ENCODE measurements at regions of chr5 and their contacts with region 1.

Region 1: GRCh38 chr5:134113902-134114875 is at the start of gene TCF7:
- DNase-seq: peak; percentile 67 to 92 (median 82)
- ATAC-seq: peak; percentile 67
- H3K4me3 ChIP-seq: peak within 1 kb of the TSS; percentile 78 to 99
- H3K4me3 Mint-ChIP-seq: peak within 1 kb of the TSS; percentile 95
- H3K27ac ChIP-seq: peak within 1 kb of the TSS; percentile 71 to 72
- H3K27ac Mint-ChIP-seq: peak within 1 kb of the TSS; percentile 96
- H3K4me1 ChIP-seq: peaks cover 37% of the 10 kb centered on the region
- H3K4me1 Mint-ChIP-seq: peaks cover 53% of the 10 kb centered on the region
- H3K27me3 ChIP-seq: no peaks in the 10 kb centered on the region
- H3K27me3 Mint-ChIP-seq: no peaks in the 10 kb centered on the region
- CTCF ChIP-seq: no peak
- total RNA-seq, gene TCF7: 517 to 538 TPM

Region 2: GRCh38 chr5:134070725-134071613 is 43.2 kb before region 1 on chr5:
- CTCF ChIA-PET with region 1: interaction called, 3 read pairs
- POLR2A ChIA-PET with region 1: interaction called, 16 read pairs
- intact Hi-C with region 1: loop called in 1 of 2 experiments (anchors 2 kb)
- DNase-seq: peak in 5 of 9 experiments; percentile 32 to 59 (median 42)
- ATAC-seq: peak; percentile 53
- H3K4me3 ChIP-seq: peak overlapping the region; percentile 40 to 44
- H3K4me3 Mint-ChIP-seq: peak overlapping the region; percentile 79
- H3K27ac ChIP-seq: no peak overlapping the region
- H3K27ac Mint-ChIP-seq: peak overlapping the region; percentile 92
- H3K4me1 ChIP-seq: peaks cover 67% of the 10 kb centered on the region
- H3K4me1 Mint-ChIP-seq: peaks cover 69% of the 10 kb centered on the region
- H3K27me3 ChIP-seq: peaks cover 0 to 3% of the 10 kb centered on the region in 2 experiments
- H3K27me3 Mint-ChIP-seq: no peaks in the 10 kb centered on the region
- CTCF ChIP-seq: peak; percentile 13

Region 3: DNA sequence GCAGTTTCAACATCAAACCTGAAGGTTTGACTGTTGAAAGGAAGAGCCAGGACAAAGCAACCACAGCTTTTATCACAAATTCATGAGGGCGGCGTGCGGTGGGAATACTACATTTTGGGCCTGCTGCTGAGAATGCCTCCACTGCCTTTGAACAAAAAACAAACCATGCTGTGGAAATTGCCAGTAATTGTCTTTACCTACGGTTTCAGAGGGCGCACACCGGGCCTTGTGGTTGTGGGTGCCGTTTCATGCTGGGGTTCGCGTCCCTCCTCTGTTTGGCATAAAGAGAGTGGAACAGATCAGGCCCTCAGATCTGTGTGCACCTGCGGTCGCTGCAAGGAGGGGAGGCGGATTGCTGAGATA is 27.3 kb before region 1 on chr5:
- CTCF ChIA-PET with region 1: no interaction called
- POLR2A ChIA-PET with region 1: no interaction called
- intact Hi-C with region 1: loop called in 1 of 2 experiments (anchors 1 kb)
- DNase-seq: peak; percentile 51 to 88 (median 81)
- ATAC-seq: peak; percentile 68
- H3K4me3 ChIP-seq: peak overlapping the region in 1 of 2 experiments; percentile 5
- H3K4me3 Mint-ChIP-seq: peak overlapping the region; percentile 64
- H3K27ac ChIP-seq: peak overlapping the region; percentile 16 to 28
- H3K27ac Mint-ChIP-seq: peak overlapping the region; percentile 89
- H3K4me1 ChIP-seq: peaks cover 87% of the 10 kb centered on the region
- H3K4me1 Mint-ChIP-seq: peaks cover 85% of the 10 kb centered on the region
- H3K27me3 ChIP-seq: peaks cover 0 to 2% of the 10 kb centered on the region in 2 experiments
- H3K27me3 Mint-ChIP-seq: no peaks in the 10 kb centered on the region
- CTCF ChIP-seq: no peak

Region 4: GRCh38 chr5:134101686-134102439 is 12.3 kb before region 1 on chr5:
- CTCF ChIA-PET with region 1: no interaction called
- POLR2A ChIA-PET with region 1: no interaction called
- intact Hi-C with region 1: loop called (anchors 1 kb)
- DNase-seq: peak; percentile 68 to 90 (median 79)
- ATAC-seq: peak; percentile 30
- H3K4me3 ChIP-seq: peak overlapping the region in 1 of 2 experiments; percentile 12
- H3K4me3 Mint-ChIP-seq: peak overlapping the region; percentile 22
- H3K27ac ChIP-seq: peak overlapping the region; percentile 24 to 28
- H3K27ac Mint-ChIP-seq: peak overlapping the region; percentile 96
- H3K4me1 ChIP-seq: peaks cover 93% of the 10 kb centered on the region
- H3K4me1 Mint-ChIP-seq: peaks cover 87% of the 10 kb centered on the region
- H3K27me3 ChIP-seq: no peaks in the 10 kb centered on the region
- H3K27me3 Mint-ChIP-seq: no peaks in the 10 kb centered on the region
- CTCF ChIP-seq: peak; percentile 84

Region 5: DNA sequence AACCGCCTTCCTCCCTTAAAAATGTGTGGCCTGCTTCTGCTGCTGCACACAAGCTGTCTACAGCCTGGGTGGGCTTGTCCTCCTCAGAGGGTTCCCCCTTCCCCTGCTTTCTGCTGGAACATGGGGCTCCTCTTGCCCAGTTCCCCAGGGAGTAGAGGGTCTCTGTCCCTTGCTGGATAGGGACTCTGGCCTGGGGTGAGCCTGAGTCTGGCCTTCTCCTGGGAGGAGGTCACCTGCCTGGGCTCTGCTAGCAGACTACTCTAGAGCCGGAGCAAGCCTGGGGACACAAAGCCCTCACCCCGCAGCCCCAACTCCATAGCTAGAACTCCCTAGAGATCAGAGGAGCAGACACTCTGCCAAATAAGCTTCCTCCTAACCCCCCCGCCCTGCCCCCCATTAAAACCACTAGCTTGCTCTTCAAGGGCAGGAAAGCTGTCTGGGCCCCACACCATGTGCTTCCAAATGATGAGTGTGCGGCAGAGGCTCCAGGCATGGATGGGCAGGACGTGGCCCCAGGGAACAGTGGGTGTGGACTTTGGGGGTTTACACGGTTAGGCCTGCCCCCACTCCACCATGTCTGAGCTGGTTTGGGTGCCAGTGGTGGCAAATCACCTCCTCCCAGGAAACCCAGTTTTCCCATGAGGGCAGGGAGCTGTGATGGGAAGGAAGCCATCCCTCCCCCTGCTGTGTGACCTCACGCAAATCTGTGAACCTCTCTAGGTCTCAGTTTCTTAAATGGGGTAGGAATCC is 10.3 kb after region 1 on chr5:
- CTCF ChIA-PET with region 1: no interaction called
- POLR2A ChIA-PET with region 1: no interaction called
- intact Hi-C with region 1: loop called in 1 of 2 experiments (anchors 1 kb)
- DNase-seq: peak in 5 of 9 experiments; percentile 67 to 85 (median 71)
- ATAC-seq: peak; percentile 28
- H3K4me3 ChIP-seq: peak overlapping the region; percentile 40 to 52
- H3K4me3 Mint-ChIP-seq: peak overlapping the region; percentile 95
- H3K27ac ChIP-seq: peak overlapping the region; percentile 64 to 83
- H3K27ac Mint-ChIP-seq: peak overlapping the region; percentile 96
- H3K4me1 ChIP-seq: peaks cover 91% of the 10 kb centered on the region
- H3K4me1 Mint-ChIP-seq: peaks cover 95% of the 10 kb centered on the region
- H3K27me3 ChIP-seq: no peaks in the 10 kb centered on the region
- H3K27me3 Mint-ChIP-seq: no peaks in the 10 kb centered on the region
- CTCF ChIP-seq: no peak

Region 6: GRCh38 chr5:134132372-134133034 is 18.3 kb after region 1 on chr5:
- CTCF ChIA-PET with region 1: no interaction called
- POLR2A ChIA-PET with region 1: no interaction called
- intact Hi-C with region 1: loop called in 1 of 2 experiments (anchors 1 kb)
- DNase-seq: peak; percentile 72 to 99 (median 85)
- ATAC-seq: peak; percentile 70
- H3K4me3 ChIP-seq: peak overlapping the region; percentile 16 to 52
- H3K4me3 Mint-ChIP-seq: peak overlapping the region; percentile 95
- H3K27ac ChIP-seq: peak overlapping the region; percentile 64 to 88
- H3K27ac Mint-ChIP-seq: peak overlapping the region; percentile 96
- H3K4me1 ChIP-seq: peaks cover 98% of the 10 kb centered on the region
- H3K4me1 Mint-ChIP-seq: peaks cover 95% of the 10 kb centered on the region
- H3K27me3 ChIP-seq: no peaks in the 10 kb centered on the region
- H3K27me3 Mint-ChIP-seq: no peaks in the 10 kb centered on the region
- CTCF ChIP-seq: peak; percentile 44

Region 7: DNA sequence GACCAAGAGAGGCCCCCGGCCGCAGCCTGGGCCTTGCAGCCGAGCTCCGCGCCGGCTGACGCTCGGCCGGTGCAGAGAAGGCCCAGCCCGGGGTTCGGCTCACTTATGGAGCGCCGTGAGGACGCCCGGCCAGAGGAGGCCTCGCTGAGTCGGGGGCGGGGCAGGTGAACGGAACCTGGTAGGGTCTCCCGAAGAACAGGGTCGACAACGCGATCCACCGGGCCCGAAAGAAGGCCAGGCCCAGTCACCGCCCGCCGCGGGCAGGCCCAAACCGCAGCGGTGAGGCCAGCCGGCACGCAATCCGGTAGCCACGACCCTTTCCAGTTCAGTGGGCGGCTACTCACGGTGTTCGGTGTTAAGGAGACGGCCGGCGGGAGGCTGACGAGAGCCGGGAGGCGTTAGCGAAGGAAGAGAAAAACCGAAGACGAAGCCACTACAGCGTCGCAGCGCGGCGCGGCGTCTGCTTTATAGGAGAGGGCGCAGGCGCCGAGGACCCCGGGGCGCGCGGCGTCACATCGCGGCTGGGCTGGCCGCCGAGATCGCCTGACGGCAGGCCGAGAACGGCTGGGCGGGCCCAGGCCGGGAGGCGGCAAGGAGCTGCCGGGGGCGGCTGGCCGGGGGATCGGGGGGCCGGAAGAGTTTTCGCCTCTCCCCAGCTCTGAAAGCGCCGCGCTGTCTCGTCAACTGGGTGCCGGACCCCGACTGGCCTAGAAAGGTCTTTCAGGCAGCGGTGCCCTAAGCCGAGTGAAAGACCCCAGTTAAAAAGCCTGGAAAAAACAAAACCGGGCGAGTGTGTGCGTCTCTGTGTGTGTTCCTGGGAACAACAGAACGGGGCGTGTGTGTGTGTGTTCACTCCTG is 62.6 kb after region 1 on chr5 and contains the start of gene SKP1:
- CTCF ChIA-PET with region 1: no interaction called
- POLR2A ChIA-PET with region 1: interaction called, 18 read pairs
- intact Hi-C with region 1: no loop called
- DNase-seq: peak; percentile 79 to 93 (median 85)
- ATAC-seq: peak; percentile 88
- H3K4me3 ChIP-seq: peak within 1 kb of the TSS; percentile 98 to 99
- H3K4me3 Mint-ChIP-seq: peak within 1 kb of the TSS; percentile 98
- H3K27ac ChIP-seq: peak within 1 kb of the TSS; percentile 98
- H3K27ac Mint-ChIP-seq: peak within 1 kb of the TSS; percentile 99
- H3K4me1 ChIP-seq: peaks cover 31% of the 10 kb centered on the region
- H3K4me1 Mint-ChIP-seq: peaks cover 34% of the 10 kb centered on the region
- H3K27me3 ChIP-seq: no peaks in the 10 kb centered on the region
- H3K27me3 Mint-ChIP-seq: no peaks in the 10 kb centered on the region
- CTCF ChIP-seq: no peak
- total RNA-seq, gene SKP1: 290 to 301 TPM